GM12878 (cell line): ENCODE measurements at regions of chr11 and their contacts with region 1.

Region 1: GRCh38 chr11:117107701-117108590 is 9.7 kb upstream of the SIK3 start:
- DNase-seq: no peak
- ATAC-seq: no peak
- H3K4me3 ChIP-seq: no peak overlapping the region
- H3K27ac ChIP-seq: no peak overlapping the region
- H3K4me1 ChIP-seq: no peaks in the 10 kb centered on the region
- H3K27me3 ChIP-seq: no peaks in the 10 kb centered on the region
- CTCF ChIP-seq: no peak
- EP300 ChIP-seq: no peak
- POLR2A ChIP-seq: no peak
- RAD21 ChIP-seq: no peak

Region 2: GRCh38 chr11:116787786-116788486 is 320.0 kb before region 1 on chr11 and contains the start of gene ZPR1:
- CTCF ChIA-PET with region 1: interaction called, 68 read pairs
- POLR2A ChIA-PET with region 1: no interaction called
- RAD21 ChIA-PET with region 1: interaction called, 15 read pairs
- SMC1A ChIA-PET with region 1: interaction called, 46 read pairs
- in situ Hi-C with region 1: loop called (anchors 5 kb)
- intact Hi-C with region 1: loop called (anchors 1 kb)
- DNase-seq: no peak
- ATAC-seq: peak; percentile 86
- H3K4me3 ChIP-seq: peak within 1 kb of the TSS; percentile 96
- H3K27ac ChIP-seq: peak within 1 kb of the TSS; percentile 72
- H3K4me1 ChIP-seq: peaks cover 18% of the 10 kb centered on the region
- H3K27me3 ChIP-seq: no peaks in the 10 kb centered on the region
- CTCF ChIP-seq: no peak
- EP300 ChIP-seq: no peak
- POLR2A ChIP-seq: peak; percentile 96
- RAD21 ChIP-seq: no peak
- polyA plus RNA-seq, gene ZPR1: 9.3 to 20.4 TPM

Region 3: GRCh38 chr11:116835791-116836631 is 271.9 kb before region 1 on chr11:
- CTCF ChIA-PET with region 1: interaction called, 31 read pairs
- POLR2A ChIA-PET with region 1: interaction called, 3 read pairs
- RAD21 ChIA-PET with region 1: interaction called, 12 read pairs
- SMC1A ChIA-PET with region 1: interaction called, 22 read pairs
- in situ Hi-C with region 1: no loop called
- intact Hi-C with region 1: loop called (anchors 1 kb)
- DNase-seq: peak; percentile 57
- ATAC-seq: peak; percentile 94
- H3K4me3 ChIP-seq: peak overlapping the region; percentile 52; the same call in 1 of the 2 replicates
- H3K27ac ChIP-seq: peak overlapping the region; percentile 20; the same call in 1 of the 2 replicates
- H3K4me1 ChIP-seq: peaks cover 8% of the 10 kb centered on the region; the same call in 1 of the 2 replicates
- H3K27me3 ChIP-seq: no peaks in the 10 kb centered on the region
- CTCF ChIP-seq: peak; percentile 68 to 81 (median 75)
- EP300 ChIP-seq: no peak
- POLR2A ChIP-seq: peak; percentile 83
- RAD21 ChIP-seq: peak; percentile 60

Region 4: GRCh38 chr11:116869610-116870009 is 238.3 kb before region 1 on chr11:
- CTCF ChIA-PET with region 1: interaction called, 14 read pairs
- POLR2A ChIA-PET with region 1: no interaction called
- RAD21 ChIA-PET with region 1: interaction called, 3 read pairs
- SMC1A ChIA-PET with region 1: no interaction called
- in situ Hi-C with region 1: no loop called
- intact Hi-C with region 1: no loop called
- DNase-seq: no peak
- ATAC-seq: no peak
- H3K4me3 ChIP-seq: no peak overlapping the region
- H3K27ac ChIP-seq: no peak overlapping the region
- H3K4me1 ChIP-seq: no peaks in the 10 kb centered on the region
- H3K27me3 ChIP-seq: no peaks in the 10 kb centered on the region
- CTCF ChIP-seq: no peak
- EP300 ChIP-seq: no peak
- POLR2A ChIP-seq: no peak
- RAD21 ChIP-seq: no peak

Region 5: GRCh38 chr11:116885951-116886655 is 221.8 kb before region 1 on chr11:
- CTCF ChIA-PET with region 1: interaction called, 105 read pairs
- POLR2A ChIA-PET with region 1: no interaction called
- RAD21 ChIA-PET with region 1: interaction called, 32 read pairs
- SMC1A ChIA-PET with region 1: interaction called, 166 read pairs
- in situ Hi-C with region 1: no loop called
- intact Hi-C with region 1: no loop called
- DNase-seq: no peak
- ATAC-seq: no peak
- H3K4me3 ChIP-seq: no peak overlapping the region
- H3K27ac ChIP-seq: no peak overlapping the region
- H3K4me1 ChIP-seq: 0 out of 2 replicates have a peak, but pooled peaks cover 3% of the 10 kb centered on the region
- H3K27me3 ChIP-seq: no peaks in the 10 kb centered on the region
- CTCF ChIP-seq: no peak
- EP300 ChIP-seq: no peak
- POLR2A ChIP-seq: no peak
- RAD21 ChIP-seq: no peak

Region 6: GRCh38 chr11:116927163-116927974 is 180.6 kb before region 1 on chr11:
- CTCF ChIA-PET with region 1: interaction called, 10 read pairs
- POLR2A ChIA-PET with region 1: interaction called, 3 read pairs
- RAD21 ChIA-PET with region 1: interaction called, 3 read pairs
- SMC1A ChIA-PET with region 1: interaction called, 5 read pairs
- in situ Hi-C with region 1: no loop called
- intact Hi-C with region 1: no loop called
- DNase-seq: no peak
- ATAC-seq: no peak
- H3K4me3 ChIP-seq: no peak overlapping the region
- H3K27ac ChIP-seq: peak overlapping the region; percentile 26; the same call in 1 of the 2 replicates
- H3K4me1 ChIP-seq: peaks cover 64% of the 10 kb centered on the region
- H3K27me3 ChIP-seq: no peaks in the 10 kb centered on the region
- CTCF ChIP-seq: peak in 2 of 3 experiments; percentile 20 to 39; a peak in 2 of 6 replicates
- EP300 ChIP-seq: no peak
- POLR2A ChIP-seq: no peak
- RAD21 ChIP-seq: peak; percentile 56

Region 7: DNA sequence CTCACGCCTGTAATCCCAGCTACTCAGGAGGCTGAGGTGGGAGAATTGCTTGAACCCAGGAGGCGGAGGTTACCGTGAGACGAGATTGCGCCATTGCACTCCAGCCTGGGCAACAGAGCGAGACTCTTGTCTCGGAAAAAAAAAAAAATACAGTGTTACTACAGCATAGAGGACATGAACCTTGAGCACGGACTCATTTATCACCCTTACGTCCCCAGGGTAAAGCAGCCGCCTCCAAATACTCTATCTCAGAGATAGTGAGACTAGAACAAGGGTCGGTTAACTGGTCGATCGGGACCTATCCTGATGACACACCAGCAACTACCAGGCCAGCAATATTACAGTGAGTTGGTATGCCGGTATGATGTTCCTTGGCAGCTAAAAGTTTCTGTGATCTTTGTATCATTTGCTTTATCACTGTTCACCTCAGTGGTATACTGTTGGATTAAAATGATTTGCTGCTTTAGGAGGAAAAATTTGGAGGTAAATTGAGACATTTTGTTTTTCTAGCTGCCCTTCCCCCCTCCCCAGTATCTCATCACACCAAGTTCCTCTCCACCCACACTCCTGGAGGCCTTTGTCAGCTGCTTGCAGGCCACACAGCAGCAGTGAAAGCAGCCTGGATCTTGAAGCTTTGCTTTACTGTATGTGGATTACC is 63.6 kb after region 1 on chr11:
- CTCF ChIA-PET with region 1: no interaction called
- POLR2A ChIA-PET with region 1: no interaction called
- RAD21 ChIA-PET with region 1: no interaction called
- SMC1A ChIA-PET with region 1: no interaction called
- in situ Hi-C with region 1: no loop called
- intact Hi-C with region 1: no loop called
- DNase-seq: no peak
- ATAC-seq: no peak
- H3K4me3 ChIP-seq: no peak overlapping the region
- H3K27ac ChIP-seq: no peak overlapping the region
- H3K4me1 ChIP-seq: no peaks in the 10 kb centered on the region
- H3K27me3 ChIP-seq: no peaks in the 10 kb centered on the region
- CTCF ChIP-seq: no peak
- EP300 ChIP-seq: no peak
- POLR2A ChIP-seq: 0 out of 2 replicates have a peak, but pooled peaks have one; percentile 43
- RAD21 ChIP-seq: no peak